ENCODE measurements at regions of chr12 and their contacts with region 1.

Region 1: GRCh38 chr12:5977556-5977955 is 32.5 kb upstream of the ANO2 start:
- DNase-seq: no peak
- H3K4me3 ChIP-seq: no peak overlapping the region
- H3K27ac ChIP-seq: no peak overlapping the region
- H3K4me1 ChIP-seq: no peaks in the 10 kb centered on the region
- H3K27me3 ChIP-seq: no peaks in the 10 kb centered on the region
- CTCF ChIP-seq: no peak

Region 2: GRCh38 chr12:4800555-4800954 is 1177.0 kb before region 1 on chr12:
- CTCF ChIA-PET with region 1: no interaction called
- POLR2A ChIA-PET with region 1: interaction called, 10 read pairs
- intact Hi-C with region 1: no loop called
- DNase-seq: no peak
- H3K4me3 ChIP-seq: no peak overlapping the region
- H3K27ac ChIP-seq: no peak overlapping the region
- H3K4me1 ChIP-seq: no peaks in the 10 kb centered on the region
- H3K27me3 ChIP-seq: peaks cover 83% of the 10 kb centered on the region
- CTCF ChIP-seq: no peak